ENCODE measurements at regions of chr2 and their contacts with region 1.

Region 1: DNA sequence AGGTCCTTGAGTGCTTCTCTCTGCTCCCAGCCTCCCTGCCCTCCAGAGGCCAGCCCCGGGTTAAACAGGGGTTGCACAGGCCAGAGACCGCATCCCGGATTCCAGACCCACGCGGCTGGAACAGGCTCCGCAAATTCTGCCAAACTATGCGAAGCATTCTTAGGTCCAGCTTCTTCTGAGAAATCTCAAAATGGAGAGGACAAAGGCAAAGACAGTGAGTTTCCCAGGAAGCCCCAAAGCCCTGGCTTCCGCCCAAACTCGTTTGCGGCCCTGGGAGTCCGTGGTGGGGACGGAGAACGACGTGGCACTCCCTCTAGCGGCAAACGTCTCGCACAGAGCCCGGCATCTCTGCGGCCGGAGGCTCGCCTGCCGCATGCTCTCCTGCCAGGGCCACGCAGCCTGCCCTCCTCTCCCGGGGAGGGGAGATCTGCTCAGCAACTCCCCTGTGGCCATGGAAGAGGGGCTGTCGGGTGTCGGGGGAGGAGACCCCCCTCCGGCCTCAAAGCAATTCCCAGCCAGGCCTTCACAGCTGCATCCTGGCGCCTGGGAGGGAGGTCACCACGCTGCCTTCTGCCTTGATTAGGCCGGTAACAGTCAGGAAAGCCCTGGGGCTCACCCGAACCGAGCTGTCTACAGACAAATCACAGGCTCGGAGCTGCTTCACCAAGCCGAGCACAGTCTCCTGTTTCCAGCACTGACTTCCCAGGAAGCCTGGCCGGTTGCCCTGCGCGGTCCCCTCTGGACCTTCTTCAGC is 33.4 kb upstream of the KLHL29 start:
- DNase-seq: peak; percentile 91
- ATAC-seq: peak; percentile 93 to 95

Region 2: DNA sequence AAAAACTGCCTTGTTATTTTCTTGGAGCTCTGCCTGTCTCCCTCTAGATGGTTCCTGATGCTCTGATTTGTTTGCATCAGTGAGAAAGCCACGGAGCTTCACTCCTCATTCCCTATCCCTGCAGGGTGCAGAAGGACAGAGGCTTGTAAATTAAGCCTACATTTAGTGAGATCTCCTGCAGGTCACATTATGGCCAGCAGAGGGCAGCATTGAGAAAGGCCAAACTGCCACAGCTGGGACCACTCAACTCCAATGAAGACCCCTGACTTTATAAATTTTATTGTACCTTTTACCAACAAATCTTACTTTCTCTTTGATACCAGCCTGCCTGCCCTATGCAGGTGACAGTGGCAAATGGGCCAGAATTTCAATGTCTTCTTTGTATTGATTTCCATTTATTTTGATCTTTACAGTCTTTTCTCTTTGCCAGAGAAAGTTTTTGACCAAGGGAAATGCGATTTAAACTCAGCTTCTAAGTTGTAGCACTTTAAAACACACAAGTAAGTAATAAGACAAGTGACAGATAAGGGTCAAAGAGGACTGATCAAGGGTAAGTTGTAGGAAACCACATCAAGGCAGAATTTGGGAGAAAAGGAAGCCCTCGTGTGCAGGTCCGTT is 995.6 kb before region 1 on chr2:
- intact Hi-C with region 1: loop called in 1 of 2 experiments (anchors 10 kb)
- DNase-seq: peak; percentile 56
- ATAC-seq: no peak

Region 3: DNA sequence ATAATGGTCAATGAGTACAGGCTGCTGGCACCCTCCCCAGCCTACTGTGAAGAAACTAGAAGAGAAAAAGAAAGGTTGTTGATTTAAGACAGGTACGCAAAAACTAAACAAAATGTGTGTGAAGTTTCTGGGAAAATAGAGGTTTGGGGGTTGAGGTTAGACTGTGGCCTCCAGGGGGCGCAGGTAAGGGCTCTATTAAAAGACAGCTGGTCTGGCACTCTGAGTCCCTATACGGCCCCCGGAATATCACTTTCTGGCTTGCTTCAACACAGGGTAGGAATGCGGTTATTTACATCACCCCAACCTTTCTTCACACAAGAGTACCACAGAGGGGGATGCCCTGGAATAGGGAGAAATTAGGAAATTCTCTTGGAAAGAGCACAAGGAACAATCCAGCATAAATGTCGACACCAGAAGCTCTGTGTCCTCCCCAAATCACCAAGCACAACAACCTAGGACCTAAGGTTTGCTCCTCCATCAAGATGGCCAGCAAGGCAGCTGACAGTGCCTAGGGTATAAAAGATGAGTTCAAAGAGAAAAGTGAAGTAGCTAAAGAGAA is 447.4 kb before region 1 on chr2:
- intact Hi-C with region 1: loop called in 1 of 2 experiments (anchors 5 kb)
- DNase-seq: peak; percentile 33
- ATAC-seq: no peak